Sigmoid colon (tissue), 7 donors: ENCODE measurements at regions of chr5 and their contacts with region 1.

Region 1: DNA sequence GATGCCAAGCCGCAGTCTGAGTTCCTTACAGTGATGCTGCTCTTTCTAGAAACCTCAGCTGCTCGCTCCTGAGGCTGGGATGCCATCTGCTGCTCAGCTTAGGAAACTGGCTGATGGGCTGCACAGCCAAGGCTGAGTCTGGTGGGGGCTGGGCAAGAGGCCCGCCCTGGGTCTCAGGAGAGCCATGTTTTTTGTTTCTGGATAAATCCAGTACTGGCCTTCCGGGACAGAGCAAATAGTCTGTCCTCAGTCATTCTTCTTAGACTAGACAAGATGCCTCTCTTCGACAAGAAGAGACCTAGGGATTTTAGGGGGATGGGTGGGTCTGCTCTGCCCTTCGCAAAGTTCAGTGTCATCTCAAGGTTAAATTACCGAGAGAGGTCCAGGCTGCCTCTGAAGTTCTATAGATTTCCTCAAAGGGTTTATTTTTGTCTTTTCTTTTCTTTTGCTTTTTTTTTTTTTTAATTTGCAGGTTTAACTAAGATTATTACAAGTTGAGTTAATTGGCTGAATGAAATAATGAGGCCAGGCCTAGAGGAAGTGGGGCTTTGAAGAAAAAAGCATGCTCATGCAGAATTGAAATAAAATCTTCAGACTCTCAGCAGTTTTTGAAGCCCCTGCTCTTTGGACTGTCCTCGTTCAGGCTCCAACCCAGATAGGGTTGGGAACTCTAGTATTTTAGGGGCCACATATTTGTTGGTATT is 30.6 kb upstream of the MATR3 start:
- DNase-seq: peak; percentile 95
- H3K4me3 ChIP-seq: no peak overlapping the region
- H3K27ac ChIP-seq: peak overlapping the region; percentile 39 to 69 (median 51)
- H3K4me1 ChIP-seq: peaks cover 0 to 14% (median 10%) of the 10 kb centered on the region in 4 donors
- H3K27me3 ChIP-seq: no peaks in the 10 kb centered on the region
- CTCF ChIP-seq: peak; percentile 77 to 92 (median 87)
- EP300 ChIP-seq: no peak
- POLR2A ChIP-seq: no peak

Region 2: DNA sequence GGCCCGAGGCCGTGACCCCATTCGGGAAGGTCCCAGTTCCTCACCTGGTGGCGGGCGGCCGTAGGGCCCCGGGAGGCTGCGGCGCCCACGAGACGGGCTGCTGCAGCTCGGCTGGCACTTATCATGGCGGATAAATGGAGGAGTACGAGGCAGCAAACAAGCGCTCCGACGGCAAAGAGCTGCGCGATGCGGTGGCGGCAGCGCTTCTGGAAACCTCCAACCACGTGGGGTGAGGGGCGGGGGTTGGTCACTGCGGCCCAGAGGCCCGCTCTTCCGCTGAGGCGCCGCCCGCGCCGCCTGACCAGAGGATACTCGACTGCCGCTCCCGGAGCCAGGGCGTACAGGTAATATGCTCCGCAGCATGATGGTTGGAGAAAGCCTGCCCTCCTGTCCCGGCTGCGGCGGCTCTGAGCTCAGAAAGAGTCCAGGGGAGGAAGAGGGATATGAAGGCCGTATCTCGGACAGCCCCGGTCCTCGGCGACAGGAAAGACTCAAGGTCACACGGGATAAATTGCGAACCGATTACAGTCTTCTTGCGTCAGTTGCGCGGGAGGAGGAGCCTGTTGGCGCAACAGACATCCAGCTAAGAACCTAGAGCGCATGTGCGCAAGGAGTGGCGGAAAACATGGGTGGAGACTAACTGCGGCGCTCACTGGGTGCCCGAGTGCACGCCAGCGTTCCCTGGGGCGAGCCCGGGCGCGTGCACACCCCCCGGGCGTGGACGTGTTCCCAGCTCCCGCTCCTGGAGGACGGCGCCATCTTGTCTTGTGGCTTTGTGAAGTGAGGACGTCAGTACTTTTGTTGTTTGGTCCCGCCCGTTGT is 687.5 kb before region 1 on chr5 and contains the start of gene HSPA9:
- intact Hi-C with region 1: loop called (anchors 2 kb)
- DNase-seq: peak; percentile 99
- H3K4me3 ChIP-seq: peak within 1 kb of the TSS; percentile 84 to 98 (median 92)
- H3K27ac ChIP-seq: peak within 1 kb of the TSS; percentile 97 to 100 (median 98)
- H3K4me1 ChIP-seq: peaks cover 0 to 26% (median 17%) of the 10 kb centered on the region in 4 donors
- H3K27me3 ChIP-seq: no peaks in the 10 kb centered on the region
- CTCF ChIP-seq: peak in 1 of 4 experiments; percentile 51
- EP300 ChIP-seq: peak in 3 of 4 donors; percentile 0 to 79 (median 31)
- POLR2A ChIP-seq: peak; percentile 78 to 92
- total RNA-seq, gene HSPA9: 148 to 244 (median 192) TPM

Region 3: DNA sequence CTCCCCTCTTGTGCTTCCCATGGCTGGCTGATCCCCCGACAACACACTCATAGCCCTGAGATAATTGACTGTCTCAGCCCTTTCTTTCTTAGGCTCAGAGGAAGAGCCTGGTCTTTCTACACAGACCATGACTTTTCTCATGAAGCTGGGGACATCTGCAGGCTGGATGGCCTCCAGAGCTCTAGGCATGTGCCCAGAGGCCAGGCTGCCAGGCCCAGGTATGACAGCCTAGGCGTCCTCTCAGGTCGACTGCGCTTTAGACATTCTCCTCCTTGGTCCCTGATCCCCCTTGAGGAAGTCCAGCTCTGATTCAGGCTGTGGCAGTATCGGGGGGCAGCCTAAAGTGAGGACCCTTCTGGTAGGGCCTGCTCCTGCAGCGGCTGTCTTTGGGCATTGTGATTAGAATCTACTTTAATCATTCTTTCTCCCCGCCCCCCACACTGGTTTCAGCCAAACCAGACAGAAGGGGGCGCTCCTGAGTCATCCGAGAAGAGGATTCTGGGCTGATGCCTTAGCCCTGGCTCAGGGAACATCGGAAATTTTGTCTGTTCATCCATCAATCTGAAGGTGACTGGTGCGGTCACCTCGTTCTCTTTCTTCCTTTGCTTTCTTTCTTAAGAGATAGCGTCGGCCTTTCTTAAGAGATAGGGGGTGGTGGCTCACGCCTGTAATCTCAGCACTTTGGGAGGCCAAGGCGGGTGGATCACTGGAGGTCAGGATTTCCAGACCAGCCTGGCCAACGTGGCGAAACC is 621.2 kb before region 1 on chr5:
- intact Hi-C with region 1: loop called (anchors 5 kb)
- DNase-seq: no peak
- H3K4me3 ChIP-seq: no peak overlapping the region
- H3K27ac ChIP-seq: no peak overlapping the region
- H3K4me1 ChIP-seq: no peaks in the 10 kb centered on the region
- H3K27me3 ChIP-seq: no peaks in the 10 kb centered on the region
- CTCF ChIP-seq: peak in 3 of 4 experiments; percentile 27 to 46 (median 36)
- EP300 ChIP-seq: no peak
- POLR2A ChIP-seq: no peak

Region 4: GRCh38 chr5:138752951-138753793 is 509.7 kb before region 1 on chr5 and contains the start of gene CTNNA1:
- intact Hi-C with region 1: loop called (anchors 2 kb)
- DNase-seq: peak; percentile 89
- H3K4me3 ChIP-seq: peak within 1 kb of the TSS; percentile 88 to 100 (median 94)
- H3K27ac ChIP-seq: peak within 1 kb of the TSS; percentile 99 to 100 (median 100)
- H3K4me1 ChIP-seq: peaks cover 0 to 33% (median 30%) of the 10 kb centered on the region in 4 donors
- H3K27me3 ChIP-seq: no peaks in the 10 kb centered on the region
- CTCF ChIP-seq: no peak
- EP300 ChIP-seq: peak in 1 of 4 donors; percentile 33
- POLR2A ChIP-seq: peak; percentile 11 to 17
- total RNA-seq, gene CTNNA1: 165 to 256 (median 194) TPM

Region 5: DNA sequence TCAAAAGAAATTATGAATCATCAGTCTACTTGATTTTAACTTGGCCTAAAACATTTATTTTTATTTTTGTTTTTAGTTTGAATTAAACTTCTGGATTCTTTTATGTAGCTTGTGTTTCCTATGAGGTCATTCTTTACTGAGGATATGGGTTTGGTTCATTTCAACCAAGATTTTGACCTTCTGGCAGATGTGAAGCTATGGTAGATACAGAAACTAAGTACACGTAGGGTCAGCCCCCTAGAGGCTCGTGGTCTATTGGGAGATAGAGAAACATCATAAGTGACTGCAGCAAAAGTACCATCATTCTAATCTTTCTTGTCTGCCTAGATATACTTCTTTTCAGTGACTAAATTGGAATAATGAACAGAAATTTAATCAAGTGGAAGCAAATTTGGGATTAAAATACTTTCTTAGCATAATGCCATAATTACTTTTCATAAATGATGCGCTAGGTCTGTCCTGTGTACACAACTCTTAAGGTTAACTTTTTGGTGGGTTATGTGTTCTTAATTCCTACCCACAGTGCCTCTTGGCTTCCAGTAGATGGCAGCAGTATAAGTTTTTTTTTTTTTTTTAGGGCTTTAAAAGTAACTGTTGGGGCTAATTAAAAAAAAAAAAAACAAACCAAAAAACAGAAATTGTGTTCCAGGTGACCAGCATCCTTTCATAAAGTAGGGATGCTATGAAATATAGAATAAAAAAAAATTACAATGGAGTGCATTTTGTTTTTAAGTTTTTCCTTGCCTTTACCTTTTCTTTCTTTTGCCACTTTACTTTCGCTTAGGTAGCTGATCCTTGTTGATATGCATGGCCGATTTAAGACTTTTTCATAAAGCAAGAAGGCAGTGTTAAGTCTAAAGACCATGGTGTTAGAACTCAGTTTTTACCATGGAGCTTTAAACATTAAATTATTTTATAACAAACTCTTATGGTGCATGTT is 437.7 kb before region 1 on chr5:
- intact Hi-C with region 1: loop called (anchors 5 kb)
- DNase-seq: no peak
- H3K4me3 ChIP-seq: no peak overlapping the region
- H3K27ac ChIP-seq: no peak overlapping the region
- H3K4me1 ChIP-seq: peaks cover 0 to 28% (median 13%) of the 10 kb centered on the region in 4 donors
- H3K27me3 ChIP-seq: no peaks in the 10 kb centered on the region
- CTCF ChIP-seq: peak in 3 of 4 experiments; percentile 8 to 50 (median 35)
- EP300 ChIP-seq: no peak
- POLR2A ChIP-seq: no peak

Region 6: GRCh38 chr5:138953387-138954256 is 309.3 kb before region 1 on chr5:
- intact Hi-C with region 1: loop called (anchors 10 kb)
- DNase-seq: peak; percentile 96
- H3K4me3 ChIP-seq: no peak overlapping the region
- H3K27ac ChIP-seq: peak overlapping the region; percentile 70 to 76 (median 76)
- H3K4me1 ChIP-seq: peaks cover 0 to 39% (median 38%) of the 10 kb centered on the region in 4 donors
- H3K27me3 ChIP-seq: no peaks in the 10 kb centered on the region
- CTCF ChIP-seq: no peak
- EP300 ChIP-seq: no peak
- POLR2A ChIP-seq: no peak

Region 7: DNA sequence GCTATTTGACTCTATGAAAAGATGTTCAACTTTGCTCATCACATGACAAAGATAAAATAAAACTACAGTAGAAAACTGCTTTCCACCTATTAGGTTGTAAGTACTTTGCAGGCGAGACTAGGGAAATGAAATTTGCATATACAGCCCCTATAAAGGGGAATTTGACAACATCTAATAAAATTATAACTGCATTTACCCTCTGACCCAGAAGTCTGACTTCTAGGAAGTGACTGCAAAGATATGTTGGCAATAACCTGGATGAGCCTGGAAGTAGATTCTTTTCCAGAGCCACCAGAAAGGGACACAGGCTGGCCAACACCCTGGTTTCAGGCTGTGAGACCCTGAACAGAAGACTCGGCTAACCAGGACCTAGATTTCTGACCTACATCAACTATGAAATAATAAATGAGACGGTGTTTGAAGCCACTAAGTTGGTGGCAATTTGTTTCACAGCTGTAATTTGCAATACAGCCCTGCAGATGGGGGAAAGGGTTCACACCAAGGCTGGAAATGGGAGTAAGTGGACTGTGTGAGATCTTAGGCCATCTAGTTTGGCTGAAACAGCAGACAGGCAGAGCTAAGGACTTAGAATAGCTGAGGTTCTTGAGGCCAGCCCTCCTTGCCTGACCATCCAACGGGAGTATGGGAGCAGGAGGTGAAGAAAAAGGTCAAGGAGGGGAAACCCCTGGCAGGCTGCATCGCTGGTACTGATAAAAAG is 171.3 kb before region 1 on chr5:
- intact Hi-C with region 1: loop called (anchors 1 kb)
- DNase-seq: no peak
- H3K4me3 ChIP-seq: no peak overlapping the region
- H3K27ac ChIP-seq: peak overlapping the region in 1 of 4 donors; percentile 5
- H3K4me1 ChIP-seq: peaks cover 0 to 21% (median 16%) of the 10 kb centered on the region in 4 donors
- H3K27me3 ChIP-seq: no peaks in the 10 kb centered on the region
- CTCF ChIP-seq: peak; percentile 33 to 46 (median 44)
- EP300 ChIP-seq: no peak
- POLR2A ChIP-seq: no peak

Region 8: DNA sequence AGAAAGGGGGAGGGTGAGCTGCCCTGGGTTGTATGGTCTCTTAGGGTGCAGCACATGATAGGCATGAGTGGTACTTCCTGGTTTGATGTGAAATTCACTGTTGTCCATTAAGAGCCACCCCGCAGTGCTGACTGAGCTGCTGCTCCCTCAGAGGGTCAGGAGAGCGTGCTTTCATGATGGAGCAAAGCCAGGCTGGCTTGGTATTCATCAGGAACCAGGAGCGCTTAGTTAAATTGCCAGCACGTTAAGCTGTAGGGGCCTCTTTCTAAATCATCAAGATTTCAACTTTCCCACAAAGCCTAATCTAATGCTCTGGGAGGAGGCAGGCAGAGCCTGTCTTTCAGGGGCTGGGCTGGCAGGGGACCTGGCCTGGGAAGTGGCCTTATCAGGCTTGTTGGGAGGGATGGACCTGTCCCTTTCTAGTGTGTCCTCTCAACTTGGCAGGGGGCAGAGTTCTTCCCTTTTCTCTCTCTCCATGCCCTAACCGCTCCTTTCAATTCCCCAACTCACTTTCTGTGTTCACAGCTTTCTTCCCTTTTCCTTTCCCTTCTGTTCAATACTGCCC is 920.0 kb after region 1 on chr5:
- intact Hi-C with region 1: no loop called
- DNase-seq: peak; percentile 77
- H3K4me3 ChIP-seq: no peak overlapping the region
- H3K27ac ChIP-seq: peak overlapping the region; percentile 45 to 66 (median 62)
- H3K4me1 ChIP-seq: peaks cover 0 to 32% (median 29%) of the 10 kb centered on the region in 4 donors
- H3K27me3 ChIP-seq: no peaks in the 10 kb centered on the region
- CTCF ChIP-seq: no peak
- EP300 ChIP-seq: no peak
- POLR2A ChIP-seq: no peak